ENCODE measurements at regions of chr9 and their contacts with region 1.

Region 1: DNA sequence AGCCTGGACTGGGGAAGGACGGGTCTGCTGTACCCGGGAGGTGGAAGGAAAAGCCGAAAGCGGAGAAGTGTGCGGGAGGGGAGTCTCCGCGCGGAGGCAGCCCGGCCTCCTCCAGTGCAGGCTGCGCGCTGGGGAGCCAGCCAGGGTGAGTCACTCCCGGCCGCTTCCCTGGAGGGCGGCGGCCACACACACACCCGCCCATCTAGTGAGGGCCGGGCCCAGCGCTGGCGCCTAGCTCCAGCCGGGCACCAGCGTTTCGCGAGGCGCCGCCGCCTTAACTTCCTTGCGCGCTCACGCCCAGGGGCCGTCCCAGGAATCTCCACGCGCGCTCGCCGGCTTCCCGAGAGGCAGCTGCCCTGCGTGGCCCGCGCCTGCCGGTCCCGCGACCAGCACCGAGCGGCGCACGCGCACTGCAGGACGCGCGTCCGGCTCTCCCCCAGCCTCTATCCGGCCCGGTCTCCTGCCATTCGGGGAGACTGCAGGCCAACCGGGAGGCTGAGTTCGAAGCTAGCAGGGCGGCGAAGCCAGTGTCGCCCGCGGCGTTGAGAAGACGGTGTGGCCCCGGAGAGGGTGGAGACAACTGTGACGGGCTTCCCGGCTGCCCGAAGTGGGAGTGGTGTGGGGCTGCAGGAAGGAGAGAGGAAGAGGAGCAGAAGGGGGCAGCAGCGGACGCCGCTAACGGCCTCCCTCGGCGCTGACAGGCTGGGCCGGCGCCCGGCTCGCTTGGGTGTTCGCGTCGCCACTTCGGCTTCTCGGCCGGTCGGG is at the start of gene JAK2:
- DNase-seq: peak; percentile 82 to 87 (median 83)
- H3K4me3 ChIP-seq: peak within 1 kb of the TSS; percentile 53
- H3K4me3 Mint-ChIP-seq: peak within 1 kb of the TSS; percentile 90 to 97 (median 96)
- H3K27ac ChIP-seq: peak within 1 kb of the TSS; percentile 73
- H3K27ac Mint-ChIP-seq: peak within 1 kb of the TSS; percentile 83 to 97 (median 94)
- H3K4me1 ChIP-seq: peaks cover 45% of the 10 kb centered on the region
- H3K4me1 Mint-ChIP-seq: peaks cover 15 to 30% (median 24%) of the 10 kb centered on the region in 4 donors
- H3K27me3 ChIP-seq: no peaks in the 10 kb centered on the region
- H3K27me3 Mint-ChIP-seq: no peaks in the 10 kb centered on the region
- total RNA-seq, gene JAK2: 17.0 to 19.9 TPM

Region 2: DNA sequence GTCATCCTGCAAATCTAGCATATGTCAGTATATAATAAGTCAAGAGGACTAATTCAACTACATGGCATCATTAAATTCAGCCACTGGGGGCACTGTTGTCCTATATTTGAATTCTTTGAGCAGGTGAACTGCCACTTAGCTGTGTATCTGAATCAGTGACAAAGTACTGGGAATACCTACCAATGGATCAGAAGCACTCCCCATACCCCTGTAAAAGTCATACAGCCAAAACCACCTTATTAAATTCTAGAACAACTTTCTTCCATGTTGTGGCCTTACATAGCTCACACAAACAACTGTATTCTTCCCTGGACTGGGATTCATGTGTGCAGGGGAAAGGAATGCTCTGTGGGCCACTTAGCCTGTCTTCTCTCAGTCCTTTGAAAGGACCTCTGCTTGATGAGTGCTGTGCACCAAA is 380.1 kb before region 1 on chr9:
- CTCF ChIA-PET with region 1: interaction called, 4 read pairs
- POLR2A ChIA-PET with region 1: interaction called, 3 read pairs
- intact Hi-C with region 1: loop called (anchors 2 kb)
- DNase-seq: peak; percentile 59 to 72 (median 70)
- H3K4me3 ChIP-seq: no peak overlapping the region
- H3K4me3 Mint-ChIP-seq: peak overlapping the region in 3 of 8 donors; percentile 27 to 67 (median 52)
- H3K27ac ChIP-seq: no peak overlapping the region
- H3K27ac Mint-ChIP-seq: peak overlapping the region in 6 of 7 donors; percentile 4 to 85 (median 57)
- H3K4me1 ChIP-seq: peaks cover 24% of the 10 kb centered on the region
- H3K4me1 Mint-ChIP-seq: peaks cover 21 to 50% (median 25%) of the 10 kb centered on the region in 4 donors
- H3K27me3 ChIP-seq: no peaks in the 10 kb centered on the region
- H3K27me3 Mint-ChIP-seq: no peaks in the 10 kb centered on the region

Region 3: GRCh38 chr9:4762108-4762885 is 222.5 kb before region 1 on chr9:
- CTCF ChIA-PET with region 1: interaction called, 249 read pairs
- POLR2A ChIA-PET with region 1: interaction called, 7 read pairs
- intact Hi-C with region 1: loop called (anchors 1 kb)
- DNase-seq: peak; percentile 75 to 79 (median 77)
- H3K4me3 ChIP-seq: no peak overlapping the region
- H3K4me3 Mint-ChIP-seq: peak overlapping the region in 6 of 8 donors; percentile 17 to 54 (median 42)
- H3K27ac ChIP-seq: no peak overlapping the region
- H3K27ac Mint-ChIP-seq: peak overlapping the region in 2 of 7 donors; percentile 28 to 71
- H3K4me1 ChIP-seq: peaks cover 11% of the 10 kb centered on the region
- H3K4me1 Mint-ChIP-seq: peaks cover 5 to 12% (median 6%) of the 10 kb centered on the region in 4 donors
- H3K27me3 ChIP-seq: peaks cover 4% of the 10 kb centered on the region
- H3K27me3 Mint-ChIP-seq: peaks cover 0 to 4% of the 10 kb centered on the region in 2 donors

Region 4: DNA sequence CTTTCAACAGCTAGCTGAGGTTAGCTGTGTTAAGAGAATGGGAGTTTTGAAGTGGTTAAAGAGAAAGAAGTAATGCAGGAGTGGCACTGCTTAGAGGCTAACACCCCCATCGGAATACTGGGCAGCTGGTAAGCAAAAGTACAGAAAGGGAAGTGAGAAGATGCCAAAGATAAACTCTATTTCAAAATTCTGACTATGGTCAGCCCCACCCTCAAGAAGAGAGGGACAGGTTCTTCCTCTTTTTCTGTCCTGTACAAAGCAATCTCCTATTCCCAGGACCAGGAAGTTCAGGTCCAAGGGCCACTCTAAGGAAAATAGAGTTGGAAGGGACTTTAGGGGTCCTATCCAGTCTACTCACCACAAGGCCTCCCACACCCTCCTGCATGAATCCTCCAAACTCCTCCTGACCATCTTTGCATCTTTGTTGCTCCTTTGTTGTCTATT is 45.7 kb before region 1 on chr9:
- CTCF ChIA-PET with region 1: interaction called, 4 read pairs
- POLR2A ChIA-PET with region 1: no interaction called
- intact Hi-C with region 1: loop called (anchors 5 kb)
- DNase-seq: peak in 2 of 5 donors; percentile 10 to 13
- H3K4me3 ChIP-seq: no peak overlapping the region
- H3K4me3 Mint-ChIP-seq: peak overlapping the region; percentile 0 to 58 (median 38)
- H3K27ac ChIP-seq: no peak overlapping the region
- H3K27ac Mint-ChIP-seq: peak overlapping the region in 6 of 7 donors; percentile 42 to 77 (median 66)
- H3K4me1 ChIP-seq: peaks cover 44% of the 10 kb centered on the region
- H3K4me1 Mint-ChIP-seq: peaks cover 42 to 53% (median 49%) of the 10 kb centered on the region in 4 donors
- H3K27me3 ChIP-seq: no peaks in the 10 kb centered on the region
- H3K27me3 Mint-ChIP-seq: no peaks in the 10 kb centered on the region

Region 5: GRCh38 chr9:5608298-5609225 is 623.8 kb after region 1 on chr9:
- CTCF ChIA-PET with region 1: no interaction called
- POLR2A ChIA-PET with region 1: no interaction called
- intact Hi-C with region 1: loop called (anchors 5 kb)
- DNase-seq: no peak
- H3K4me3 ChIP-seq: no peak overlapping the region
- H3K4me3 Mint-ChIP-seq: peak overlapping the region; percentile 58 to 78 (median 70)
- H3K27ac ChIP-seq: no peak overlapping the region
- H3K27ac Mint-ChIP-seq: peak overlapping the region in 5 of 7 donors; percentile 49 to 86 (median 77)
- H3K4me1 ChIP-seq: peaks cover 5% of the 10 kb centered on the region
- H3K4me1 Mint-ChIP-seq: peaks cover 10 to 19% (median 16%) of the 10 kb centered on the region in 4 donors
- H3K27me3 ChIP-seq: no peaks in the 10 kb centered on the region
- H3K27me3 Mint-ChIP-seq: no peaks in the 10 kb centered on the region

Measured in CD4-positive, alpha-beta memory T cell (primary cell).